Psoas muscle (tissue), 8 donors: ENCODE measurements at regions of chr3 and their contacts with region 1.

Region 1: GRCh38 chr3:17044855-17045254 is 160.1 kb downstream of the PLCL2 start:
- DNase-seq: no peak
- ATAC-seq: no peak
- H3K4me3 ChIP-seq: no peak overlapping the region
- H3K27ac ChIP-seq: no peak overlapping the region
- H3K4me1 ChIP-seq: peaks cover 14% of the 10 kb centered on the region
- H3K27me3 ChIP-seq: no peaks in the 10 kb centered on the region
- CTCF ChIP-seq: no peak

Region 2: GRCh38 chr3:17233398-17233800 is 188.5 kb after region 1 on chr3:
- intact Hi-C with region 1: loop called in 1 of 2 experiments (anchors 10 kb)
- DNase-seq: no peak
- ATAC-seq: peak; percentile 89 to 96 (median 94)
- H3K4me3 ChIP-seq: no peak overlapping the region
- H3K27ac ChIP-seq: peak overlapping the region; percentile 66
- H3K4me1 ChIP-seq: peaks cover 33% of the 10 kb centered on the region
- H3K27me3 ChIP-seq: no peaks in the 10 kb centered on the region
- CTCF ChIP-seq: peak; percentile 82